Head of caudate nucleus (tissue), 42 donors: ENCODE measurements at regions of chr4 and their contacts with region 1.

Region 1: GRCh38 chr4:173257732-173258717 is 76.1 kb downstream of the HMGB2 start:
- DNase-seq: peak; percentile 45 to 91 (median 79)

Region 2: DNA sequence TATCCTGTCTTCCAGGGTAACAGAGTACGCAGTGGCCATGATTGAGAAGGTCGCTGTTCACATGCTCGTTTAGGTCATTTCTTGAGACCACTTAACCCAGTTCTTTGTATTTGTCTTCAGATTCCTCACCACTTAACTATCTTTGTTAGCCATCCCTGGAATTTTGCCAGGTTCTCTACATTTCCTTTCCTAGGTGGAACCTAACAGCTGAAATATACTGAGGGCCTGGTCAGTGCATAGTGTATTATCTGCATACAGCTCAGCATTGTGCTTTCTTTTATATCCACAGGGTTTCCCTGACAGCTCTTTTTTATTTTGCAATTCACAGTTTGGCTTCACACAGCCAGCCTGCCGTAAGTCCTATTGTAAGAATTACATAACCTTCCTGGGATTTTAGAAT is 238.3 kb before region 1 on chr4:
- intact Hi-C with region 1: loop called (anchors 5 kb)
- DNase-seq: no peak